Prostate gland (tissue), 2 donors: ENCODE measurements at regions of chr11 and their contacts with region 1.

Region 1: GRCh38 chr11:2825889-2826678 is 59.5 kb downstream of the CDKN1C start:
- DNase-seq: peak; percentile 82
- H3K4me3 ChIP-seq: no peak overlapping the region
- H3K27ac ChIP-seq: peak overlapping the region; percentile 84 to 85
- H3K4me1 ChIP-seq: peaks cover 20% of the 10 kb centered on the region
- H3K27me3 ChIP-seq: no peaks in the 10 kb centered on the region
- CTCF ChIP-seq: no peak
- POLR2A ChIP-seq: no peak

Region 2: GRCh38 chr11:2699531-2700414 is 126.3 kb before region 1 on chr11 and contains the start of gene KCNQ1OT1:
- intact Hi-C with region 1: loop called (anchors 5 kb)
- DNase-seq: peak; percentile 89
- H3K4me3 ChIP-seq: peak within 1 kb of the TSS; percentile 60 to 61
- H3K27ac ChIP-seq: peak within 1 kb of the TSS; percentile 80 to 84
- H3K4me1 ChIP-seq: no peaks in the 10 kb centered on the region
- H3K27me3 ChIP-seq: no peaks in the 10 kb centered on the region
- CTCF ChIP-seq: no peak
- POLR2A ChIP-seq: peak; percentile 93
- total RNA-seq, gene KCNQ1OT1: 1.0 to 2.1 TPM

Region 3: DNA sequence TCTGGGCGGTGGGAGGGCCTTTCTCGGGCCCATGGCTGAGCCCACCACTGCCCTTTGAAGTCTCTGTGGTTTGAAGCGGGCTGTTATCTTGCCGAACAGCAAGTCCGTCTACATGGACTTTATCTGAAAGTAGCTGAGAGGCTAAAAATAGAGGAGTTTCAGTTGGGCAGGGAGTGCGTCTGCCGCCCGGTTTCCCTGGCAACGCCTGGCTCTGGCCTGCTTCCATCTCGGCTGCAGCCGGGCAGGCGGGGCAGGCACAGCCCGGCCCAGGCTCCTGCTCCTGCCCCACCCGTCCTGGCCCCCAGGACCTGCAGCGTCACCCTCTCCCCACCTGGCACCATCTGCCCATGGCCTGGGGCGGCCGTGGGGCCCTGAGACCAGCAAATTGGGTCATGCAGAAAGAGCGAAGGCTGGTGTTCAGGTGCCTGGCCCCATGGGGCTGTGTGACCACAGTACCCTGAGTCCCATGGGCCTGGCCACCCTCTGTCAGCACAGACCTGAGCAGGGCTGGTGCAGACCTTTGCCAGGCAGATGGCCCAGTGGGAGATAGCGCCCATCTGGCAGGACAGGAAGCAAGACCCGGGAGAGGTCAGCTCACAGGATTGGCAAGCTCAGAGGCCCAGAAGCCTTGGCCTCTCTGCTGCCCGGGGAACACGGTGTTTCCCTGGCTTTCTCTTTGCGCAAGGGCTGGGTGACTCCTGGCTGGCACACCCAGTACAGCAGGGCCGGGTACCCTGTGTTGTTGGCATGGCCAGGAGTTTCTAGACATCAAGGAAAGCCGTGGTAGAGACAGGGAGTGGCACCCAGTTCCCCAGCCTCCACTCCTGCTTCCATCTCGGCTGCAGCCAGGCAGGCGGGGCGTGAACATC is 47.2 kb before region 1 on chr11:
- intact Hi-C with region 1: loop called (anchors 5 kb)
- DNase-seq: peak; percentile 87
- H3K4me3 ChIP-seq: no peak overlapping the region
- H3K27ac ChIP-seq: peak overlapping the region; percentile 74
- H3K4me1 ChIP-seq: peaks cover 16% of the 10 kb centered on the region
- H3K27me3 ChIP-seq: no peaks in the 10 kb centered on the region
- CTCF ChIP-seq: peak in 2 of 4 experiments; percentile 60 to 70
- POLR2A ChIP-seq: peak; percentile 7

Region 4: GRCh38 chr11:2807025-2807681 is 18.9 kb before region 1 on chr11:
- intact Hi-C with region 1: loop called (anchors 1 kb)
- DNase-seq: peak; percentile 84
- H3K4me3 ChIP-seq: peak overlapping the region in 1 of 2 donors; percentile 2
- H3K27ac ChIP-seq: peak overlapping the region; percentile 51 to 64
- H3K4me1 ChIP-seq: peaks cover 4% of the 10 kb centered on the region
- H3K27me3 ChIP-seq: no peaks in the 10 kb centered on the region
- CTCF ChIP-seq: no peak
- POLR2A ChIP-seq: peak; percentile 42